Activated CD4-positive, alpha-beta memory T cell treated with anti-CD3 and anti-CD28 coated beads, Interleukin-2, amount 10 ng/mL, durations not matched to agents 7 days and 5 days (primary cell): ENCODE measurements at regions of chr9 and their contacts with region 1.

Region 1: GRCh38 chr9:33458444-33458843 is 11.1 kb upstream of the AQP3 start:
- DNase-seq: peak; percentile 58
- H3K4me3 Mint-ChIP-seq: no peak overlapping the region
- H3K27ac Mint-ChIP-seq: peak overlapping the region; percentile 81
- H3K4me1 Mint-ChIP-seq: peaks cover 54% of the 10 kb centered on the region
- H3K27me3 Mint-ChIP-seq: no peaks in the 10 kb centered on the region

Region 2: GRCh38 chr9:33349744-33350143 is 108.7 kb before region 1 on chr9:
- CTCF ChIA-PET with region 1: no interaction called
- POLR2A ChIA-PET with region 1: no interaction called
- DNase-seq: no peak
- H3K4me3 Mint-ChIP-seq: no peak overlapping the region
- H3K27ac Mint-ChIP-seq: no peak overlapping the region
- H3K4me1 Mint-ChIP-seq: peaks cover 7% of the 10 kb centered on the region
- H3K27me3 Mint-ChIP-seq: no peaks in the 10 kb centered on the region

Region 3: DNA sequence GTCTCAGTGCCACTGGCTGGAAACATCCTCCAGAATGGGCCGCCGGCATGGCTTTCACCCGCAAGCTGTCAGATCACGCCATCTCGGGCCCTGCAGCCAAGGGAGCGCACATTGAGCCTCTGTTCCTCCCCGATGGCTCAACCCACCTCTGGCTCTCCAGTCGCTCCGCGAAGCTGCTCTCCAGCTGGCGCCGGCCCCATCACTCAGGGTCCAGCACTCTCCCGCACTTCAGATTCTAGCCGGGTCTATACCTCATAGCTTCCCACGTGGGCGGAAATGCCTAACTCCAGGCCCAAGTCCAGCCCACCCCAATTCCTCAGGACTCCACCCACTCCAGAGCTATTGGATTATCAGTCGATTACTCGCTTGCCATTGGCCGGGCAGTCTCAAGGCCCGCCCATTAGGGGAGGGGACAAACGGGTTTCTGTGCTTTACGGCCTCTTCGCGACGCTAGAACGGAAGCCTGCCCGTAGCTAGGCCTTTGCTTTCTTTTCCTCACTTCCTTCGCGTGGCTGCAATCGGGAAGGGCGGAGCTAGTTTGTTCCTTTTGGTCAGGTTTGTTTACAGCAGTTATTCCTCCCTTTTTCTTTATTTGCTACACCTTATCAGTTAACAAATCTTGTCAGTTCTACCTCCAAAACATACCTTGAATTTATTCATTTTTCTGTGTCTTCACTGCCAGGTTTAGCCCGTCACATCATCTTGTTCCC is 15.4 kb after region 1 on chr9 and contains the start of gene NOL6:
- CTCF ChIA-PET with region 1: interaction called, 189 read pairs
- POLR2A ChIA-PET with region 1: interaction called, 40 read pairs
- DNase-seq: peak; percentile 98
- H3K4me3 Mint-ChIP-seq: peak within 1 kb of the TSS; percentile 92
- H3K27ac Mint-ChIP-seq: peak within 1 kb of the TSS; percentile 85
- H3K4me1 Mint-ChIP-seq: peaks cover 30% of the 10 kb centered on the region
- H3K27me3 Mint-ChIP-seq: no peaks in the 10 kb centered on the region
- total RNA-seq, gene NOL6: 21.6 to 22.4 TPM